ENCODE measurements at regions of chr12 and their contacts with region 1.

Region 1: DNA sequence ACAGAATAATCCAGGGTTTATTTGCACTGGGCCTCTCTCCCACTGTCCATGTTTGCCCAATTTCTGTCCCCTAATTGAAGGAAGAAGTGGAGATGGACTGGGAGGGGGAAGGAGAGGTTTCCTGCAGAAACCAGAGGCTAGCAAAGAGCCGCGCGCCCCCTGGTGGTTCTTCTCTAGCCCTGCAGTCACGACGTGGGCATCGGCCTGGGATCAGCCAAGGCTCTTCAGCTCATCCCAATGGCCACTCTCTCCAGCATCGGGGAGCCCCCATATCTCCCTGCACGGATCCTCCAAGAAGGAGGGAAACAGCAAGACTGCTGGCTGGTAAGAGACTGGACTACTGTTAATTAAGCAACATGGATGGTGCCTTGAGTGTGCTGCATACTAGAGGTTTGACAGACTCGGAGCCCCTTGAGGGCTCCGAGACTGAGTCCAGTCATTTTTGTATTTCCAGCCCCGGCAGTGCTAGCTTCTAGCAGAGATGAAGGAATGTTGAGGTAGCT is 18.7 kb downstream of the ZBTB39 start:
- DNase-seq: peak; percentile 77
- H3K4me3 ChIP-seq: no peak overlapping the region
- H3K27ac ChIP-seq: no peak overlapping the region
- H3K4me1 ChIP-seq: peaks cover 9% of the 10 kb centered on the region
- CTCF ChIP-seq: peak; percentile 95

Region 2: DNA sequence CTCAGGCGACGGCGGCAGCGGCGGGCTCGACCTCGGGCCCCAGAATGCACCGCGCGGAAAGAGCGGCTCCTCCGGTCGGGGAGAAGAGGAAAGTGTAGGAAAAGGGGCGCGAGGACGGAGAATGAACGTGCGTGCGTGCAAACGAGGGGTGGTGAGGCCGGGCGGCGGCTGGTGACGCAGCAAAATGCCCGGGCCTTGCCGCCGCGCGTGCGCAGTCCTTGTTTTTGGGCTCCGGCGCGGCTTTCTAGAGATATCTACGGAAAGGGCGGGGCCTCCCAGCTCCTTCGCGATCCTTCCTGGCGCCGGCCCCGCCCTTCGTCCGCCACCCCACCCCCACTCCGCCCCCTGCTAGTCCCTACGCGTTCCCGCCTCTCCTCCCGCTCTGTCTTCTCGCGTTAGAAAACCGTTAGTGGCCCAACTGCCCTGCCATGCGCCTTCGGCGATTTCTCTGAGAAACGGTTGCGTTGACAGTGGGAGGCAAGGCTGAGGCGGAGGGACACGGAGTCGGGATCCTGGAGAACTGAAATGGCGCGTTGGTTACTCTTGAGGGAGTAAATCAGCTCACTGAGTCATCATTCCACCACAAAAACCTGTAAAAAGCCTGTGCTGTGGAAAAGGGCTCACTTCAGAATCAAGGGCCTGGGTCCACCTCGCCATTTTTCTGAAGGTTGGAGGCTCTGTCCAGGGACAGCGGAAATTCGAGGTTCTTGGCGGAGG is 299.3 kb before region 1 on chr12 and contains the start of gene PTGES3:
- CTCF ChIA-PET with region 1: no interaction called
- POLR2A ChIA-PET with region 1: no interaction called
- intact Hi-C with region 1: no loop called
- DNase-seq: peak; percentile 98
- H3K4me3 ChIP-seq: peak within 1 kb of the TSS; percentile 94
- H3K27ac ChIP-seq: peak within 1 kb of the TSS; percentile 91
- H3K4me1 ChIP-seq: peaks cover 34% of the 10 kb centered on the region
- CTCF ChIP-seq: no peak
- total RNA-seq, gene PTGES3: 77.3 and 91.2 TPM in 2 replicates

Region 3: GRCh38 chr12:56751712-56752598 is 235.6 kb before region 1 on chr12 and contains the start of gene PRIM1:
- CTCF ChIA-PET with region 1: no interaction called
- POLR2A ChIA-PET with region 1: interaction called, 4 read pairs
- intact Hi-C with region 1: loop called (anchors 1 kb)
- DNase-seq: peak; percentile 94
- H3K4me3 ChIP-seq: peak within 1 kb of the TSS; percentile 76
- H3K27ac ChIP-seq: peak within 1 kb of the TSS; percentile 94
- H3K4me1 ChIP-seq: peaks cover 25% of the 10 kb centered on the region
- CTCF ChIP-seq: no peak
- total RNA-seq, gene PRIM1: 17.1 and 20.4 TPM in 2 replicates

Region 4: GRCh38 chr12:56839915-56840325 is 147.7 kb before region 1 on chr12:
- CTCF ChIA-PET with region 1: no interaction called
- POLR2A ChIA-PET with region 1: no interaction called
- intact Hi-C with region 1: loop called (anchors 1 kb)
- DNase-seq: peak; percentile 39
- H3K4me3 ChIP-seq: no peak overlapping the region
- H3K27ac ChIP-seq: no peak overlapping the region
- H3K4me1 ChIP-seq: no peaks in the 10 kb centered on the region
- CTCF ChIP-seq: peak; percentile 80

Region 5: GRCh38 chr12:57012600-57013465 is 25.2 kb after region 1 on chr12:
- CTCF ChIA-PET with region 1: no interaction called
- POLR2A ChIA-PET with region 1: no interaction called
- intact Hi-C with region 1: no loop called
- DNase-seq: no peak
- H3K4me3 ChIP-seq: no peak overlapping the region
- H3K27ac ChIP-seq: no peak overlapping the region
- H3K4me1 ChIP-seq: no peaks in the 10 kb centered on the region
- CTCF ChIP-seq: no peak

Region 6: DNA sequence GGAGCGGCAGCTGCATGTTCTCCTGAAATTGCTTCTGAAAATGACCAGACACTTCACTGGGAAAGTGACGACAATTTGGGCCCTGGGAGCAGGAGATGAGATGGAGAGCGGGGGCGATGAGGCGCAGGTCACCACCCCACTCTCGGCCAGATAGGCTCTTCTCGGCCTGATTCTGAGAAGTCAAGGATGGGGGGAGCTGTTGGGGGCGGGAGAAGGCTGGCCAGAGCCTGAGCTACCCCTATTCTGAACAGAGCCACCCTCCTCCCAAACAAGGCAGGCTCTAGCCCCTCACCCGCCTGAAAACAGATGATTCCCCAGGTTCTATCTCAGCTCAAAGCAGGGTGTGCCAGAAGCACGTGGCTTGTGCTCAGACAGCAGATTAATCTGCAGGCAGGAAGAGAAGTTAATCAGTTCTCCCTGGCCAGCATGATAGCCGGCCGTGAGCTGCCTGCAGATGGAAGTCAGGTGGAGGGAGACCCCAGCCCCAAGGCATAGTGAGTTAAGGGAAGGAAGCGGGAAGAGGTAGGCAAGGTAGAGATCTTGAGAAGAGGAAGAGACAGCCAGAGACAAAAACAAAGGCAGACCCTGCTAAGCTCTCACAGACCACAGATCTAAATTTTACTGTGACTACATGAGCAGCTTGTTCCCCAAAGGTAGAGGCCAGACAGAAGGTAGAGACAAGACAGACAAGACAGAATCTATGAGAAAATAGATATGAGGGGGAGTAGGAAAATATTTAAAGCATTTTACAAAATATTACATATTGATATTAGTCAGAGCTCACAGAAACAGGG is 39.6 kb after region 1 on chr12:
- CTCF ChIA-PET with region 1: no interaction called
- POLR2A ChIA-PET with region 1: no interaction called
- intact Hi-C with region 1: no loop called
- DNase-seq: no peak
- H3K4me3 ChIP-seq: no peak overlapping the region
- H3K27ac ChIP-seq: no peak overlapping the region
- H3K4me1 ChIP-seq: peaks cover 5% of the 10 kb centered on the region
- CTCF ChIP-seq: no peak

Measured in OCI-LY7 (cell line).